Mammary epithelial cell (primary cell): ENCODE measurements at regions of chrX and their contacts with region 1.

Region 1: GRCh38 chrX:123749643-123750042 is 16.8 kb upstream of the THOC2 start:
- DNase-seq: no peak
- H3K4me3 ChIP-seq: no peak overlapping the region
- H3K27ac ChIP-seq: no peak overlapping the region
- H3K4me1 ChIP-seq: no peaks in the 10 kb centered on the region
- H3K27me3 ChIP-seq: no peaks in the 10 kb centered on the region
- CTCF ChIP-seq: no peak

Region 2: GRCh38 chrX:123698979-123699520 is 50.6 kb before region 1 on chrX:
- CTCF ChIA-PET with region 1: no interaction called
- dilution Hi-C with region 1: loop called (anchors 5 kb)
- in situ Hi-C with region 1: no loop called
- intact Hi-C with region 1: no loop called
- DNase-seq: no peak
- H3K4me3 ChIP-seq: no peak overlapping the region
- H3K27ac ChIP-seq: no peak overlapping the region
- H3K4me1 ChIP-seq: no peaks in the 10 kb centered on the region
- H3K27me3 ChIP-seq: no peaks in the 10 kb centered on the region
- CTCF ChIP-seq: no peak

Region 3: DNA sequence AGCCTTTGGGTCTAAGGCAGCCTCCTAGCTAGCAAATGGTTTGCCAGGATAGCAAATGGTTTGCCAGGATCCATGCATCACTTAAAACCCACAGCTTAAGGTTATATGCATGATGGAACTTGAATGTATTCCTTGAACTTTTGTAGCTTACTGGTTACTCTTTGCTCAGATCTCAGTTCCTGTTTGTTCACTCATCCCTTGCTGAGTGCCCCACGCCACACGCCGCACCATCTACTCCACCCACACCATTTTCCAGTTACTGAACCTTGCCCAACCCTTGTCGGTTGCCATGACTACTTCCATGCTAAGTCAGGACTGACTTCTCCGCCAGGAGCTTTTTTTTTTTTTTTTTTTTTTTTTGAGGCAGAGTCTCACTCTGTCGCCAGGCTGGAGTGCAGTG is 80.7 kb after region 1 on chrX:
- CTCF ChIA-PET with region 1: no interaction called
- dilution Hi-C with region 1: no loop called
- in situ Hi-C with region 1: no loop called
- intact Hi-C with region 1: no loop called
- DNase-seq: peak; percentile 86
- H3K4me3 ChIP-seq: no peak overlapping the region
- H3K27ac ChIP-seq: peak overlapping the region; percentile 35
- H3K4me1 ChIP-seq: no peaks in the 10 kb centered on the region
- H3K27me3 ChIP-seq: no peaks in the 10 kb centered on the region
- CTCF ChIP-seq: no peak

Region 4: GRCh38 chrX:123949846-123950245 is 200.2 kb after region 1 on chrX:
- CTCF ChIA-PET with region 1: no interaction called
- dilution Hi-C with region 1: no loop called
- in situ Hi-C with region 1: no loop called
- intact Hi-C with region 1: no loop called
- DNase-seq: no peak
- H3K4me3 ChIP-seq: no peak overlapping the region
- H3K27ac ChIP-seq: no peak overlapping the region
- H3K4me1 ChIP-seq: no peaks in the 10 kb centered on the region
- H3K27me3 ChIP-seq: no peaks in the 10 kb centered on the region
- CTCF ChIP-seq: no peak